Psoas muscle (tissue), 8 donors: ENCODE measurements at regions of chr17 and their contacts with region 1.

Region 1: DNA sequence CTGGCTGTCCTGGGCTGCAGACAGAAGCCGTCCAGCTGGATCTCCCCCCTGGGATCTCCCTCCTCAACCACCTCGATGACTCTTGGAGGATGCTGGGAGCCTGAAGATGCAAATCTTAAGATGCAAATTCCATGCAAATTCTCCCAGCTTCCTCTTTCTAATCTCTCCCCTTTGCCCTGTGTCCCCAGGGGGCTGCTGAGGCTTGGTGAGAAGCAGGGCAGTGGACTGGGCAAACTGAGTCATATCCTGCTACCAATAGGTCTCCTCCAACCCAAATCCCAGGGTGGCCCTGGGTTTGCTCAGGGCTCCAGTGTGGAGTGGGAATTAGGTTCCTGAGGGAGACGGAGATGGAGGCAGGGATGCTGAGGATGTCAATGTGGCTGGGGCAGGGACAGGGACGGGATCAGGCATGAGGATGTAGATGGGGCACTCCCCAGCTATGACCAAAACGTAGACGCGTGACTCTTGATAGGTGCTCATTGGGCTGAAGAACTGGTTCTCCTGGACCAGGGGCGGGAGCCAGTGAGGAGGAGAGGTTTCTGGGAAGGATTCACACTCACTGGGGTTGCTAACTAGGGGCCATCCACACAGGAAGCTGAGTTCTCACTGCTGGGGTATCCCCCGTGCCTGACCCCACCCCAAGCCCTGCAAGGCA is 3.6 kb upstream of the ALOX12B start:
- DNase-seq: peak in 1 of 2 donors; percentile 40
- ATAC-seq: no peak
- H3K4me3 ChIP-seq: no peak overlapping the region
- H3K27ac ChIP-seq: no peak overlapping the region
- H3K4me1 ChIP-seq: no peaks in the 10 kb centered on the region
- H3K27me3 ChIP-seq: peaks cover 0 to 22% (median 6%) of the 10 kb centered on the region in 3 donors
- CTCF ChIP-seq: no peak

Region 2: GRCh38 chr17:7729816-7730215 is 361.3 kb before region 1 on chr17:
- intact Hi-C with region 1: loop called in 1 of 2 experiments (anchors 5 kb)
- DNase-seq: no peak
- ATAC-seq: no peak
- H3K4me3 ChIP-seq: no peak overlapping the region
- H3K27ac ChIP-seq: no peak overlapping the region
- H3K4me1 ChIP-seq: no peaks in the 10 kb centered on the region
- H3K27me3 ChIP-seq: peaks cover 0 to 7% (median 0%) of the 10 kb centered on the region in 3 donors
- CTCF ChIP-seq: no peak

Region 3: GRCh38 chr17:8156246-8156992 is 65.3 kb after region 1 on chr17:
- intact Hi-C with region 1: loop called in 1 of 2 experiments (anchors 2 kb)
- DNase-seq: peak; percentile 100
- ATAC-seq: peak; percentile 59 to 68 (median 64)
- H3K4me3 ChIP-seq: peak overlapping the region; percentile 97
- H3K27ac ChIP-seq: peak overlapping the region; percentile 100
- H3K4me1 ChIP-seq: peaks cover 31% of the 10 kb centered on the region
- H3K27me3 ChIP-seq: no peaks in the 10 kb centered on the region
- CTCF ChIP-seq: no peak

Region 4: GRCh38 chr17:8300627-8301242 is 209.6 kb after region 1 on chr17:
- intact Hi-C with region 1: loop called in 1 of 2 experiments (anchors 10 kb)
- DNase-seq: peak; percentile 43 to 72
- ATAC-seq: peak; percentile 88 to 93 (median 91)
- H3K4me3 ChIP-seq: no peak overlapping the region
- H3K27ac ChIP-seq: no peak overlapping the region
- H3K4me1 ChIP-seq: no peaks in the 10 kb centered on the region
- H3K27me3 ChIP-seq: no peaks in the 10 kb centered on the region
- CTCF ChIP-seq: peak; percentile 82